ENCODE measurements at regions of chr3 and their contacts with region 1.

Region 1: GRCh38 chr3:120062474-120062873 is 31.8 kb downstream of the GSK3B start:
- DNase-seq: no peak
- H3K4me3 Mint-ChIP-seq: no peak overlapping the region
- H3K27ac Mint-ChIP-seq: no peak overlapping the region
- H3K4me1 Mint-ChIP-seq: no peaks in the 10 kb centered on the region
- H3K27me3 Mint-ChIP-seq: no peaks in the 10 kb centered on the region
- CTCF ChIP-seq: no peak

Region 2: GRCh38 chr3:120013481-120013880 is 49.0 kb before region 1 on chr3:
- CTCF ChIA-PET with region 1: no interaction called
- intact Hi-C with region 1: loop called (anchors 10 kb)
- DNase-seq: no peak
- H3K4me3 Mint-ChIP-seq: no peak overlapping the region
- H3K27ac Mint-ChIP-seq: no peak overlapping the region
- H3K4me1 Mint-ChIP-seq: peaks cover 13% of the 10 kb centered on the region
- H3K27me3 Mint-ChIP-seq: no peaks in the 10 kb centered on the region
- CTCF ChIP-seq: no peak